Endothelial cell of umbilical vein (primary cell): ENCODE measurements at regions of chr13 and their contacts with region 1.

Region 1: DNA sequence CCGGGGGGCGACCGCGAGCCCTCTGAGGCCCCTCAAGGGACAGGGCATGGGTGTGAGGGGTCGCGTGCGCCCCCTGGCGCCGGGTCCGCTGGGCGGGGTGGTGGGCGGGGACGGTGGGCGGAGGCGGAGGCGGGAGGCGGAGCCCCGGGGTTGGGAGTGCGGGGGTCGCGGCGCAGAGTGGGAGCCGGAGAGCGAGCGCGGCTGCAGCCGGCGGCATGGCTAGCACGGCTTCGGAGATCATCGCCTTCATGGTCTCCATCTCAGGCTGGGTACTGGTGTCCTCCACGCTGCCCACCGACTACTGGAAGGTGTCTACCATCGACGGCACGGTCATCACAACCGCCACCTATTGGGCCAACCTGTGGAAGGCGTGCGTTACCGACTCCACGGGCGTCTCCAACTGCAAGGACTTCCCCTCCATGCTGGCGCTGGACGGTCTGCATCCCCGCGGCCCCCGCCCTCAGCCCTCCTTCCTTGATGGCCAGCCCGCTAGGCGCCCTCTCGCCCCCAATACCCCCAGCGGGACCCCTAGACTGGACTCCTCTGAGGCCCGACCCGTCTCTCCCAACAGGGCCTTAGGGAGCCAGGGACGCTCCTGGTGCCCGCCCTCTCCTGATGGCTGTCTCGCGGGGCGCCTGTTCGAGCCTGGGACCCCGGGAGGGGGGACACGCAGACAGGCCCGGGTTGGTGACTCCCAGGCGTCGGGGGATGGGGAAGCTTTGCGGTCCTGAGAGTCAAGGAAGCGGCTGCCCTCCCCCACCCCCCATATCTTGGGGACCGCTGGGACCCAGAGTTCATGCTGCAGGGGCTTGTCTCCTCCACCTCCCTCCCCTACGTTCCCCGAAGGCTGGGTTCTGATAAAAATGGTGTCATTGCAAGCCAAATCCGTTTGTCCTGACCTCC is at the start of gene CLDN10:
- DNase-seq: no peak
- H3K4me3 ChIP-seq: peak within 1 kb of the TSS in 2 of 3 experiments; percentile 3 to 40
- H3K27ac ChIP-seq: no peak within 1 kb of the TSS
- H3K4me1 ChIP-seq: no peaks in the 10 kb centered on the region
- H3K27me3 ChIP-seq: peaks cover 12 to 21% of the 10 kb centered on the region in 2 experiments
- CTCF ChIP-seq: peak; percentile 32 to 54
- POLR2A ChIP-seq: no peak
- total RNA-seq, gene CLDN10: 0.49 TPM in 1 of 2 replicates, not detected in the other

Region 2: GRCh38 chr13:94992036-94992960 is 560.5 kb before region 1 on chr13:
- CTCF ChIA-PET with region 1: no interaction called
- POLR2A ChIA-PET with region 1: no interaction called
- dilution Hi-C with region 1: no loop called
- intact Hi-C with region 1: no loop called
- DNase-seq: no peak
- H3K4me3 ChIP-seq: no peak overlapping the region
- H3K27ac ChIP-seq: no peak overlapping the region
- H3K4me1 ChIP-seq: no peaks in the 10 kb centered on the region
- H3K27me3 ChIP-seq: peaks cover 22 to 42% of the 10 kb centered on the region in 2 experiments
- CTCF ChIP-seq: no peak
- POLR2A ChIP-seq: no peak

Region 3: GRCh38 chr13:95156208-95156607 is 396.6 kb before region 1 on chr13:
- CTCF ChIA-PET with region 1: no interaction called
- POLR2A ChIA-PET with region 1: no interaction called
- dilution Hi-C with region 1: no loop called
- intact Hi-C with region 1: no loop called
- DNase-seq: peak; percentile 50
- H3K4me3 ChIP-seq: no peak overlapping the region
- H3K27ac ChIP-seq: no peak overlapping the region
- H3K4me1 ChIP-seq: peaks cover 22% of the 10 kb centered on the region
- H3K27me3 ChIP-seq: no peaks in the 10 kb centered on the region
- CTCF ChIP-seq: peak; percentile 18 to 27
- POLR2A ChIP-seq: no peak

Region 4: GRCh38 chr13:95494082-95494681 is 58.6 kb before region 1 on chr13:
- CTCF ChIA-PET with region 1: interaction called, 4 read pairs
- POLR2A ChIA-PET with region 1: no interaction called
- dilution Hi-C with region 1: no loop called
- intact Hi-C with region 1: loop called (anchors 1 kb)
- DNase-seq: peak; percentile 85
- H3K4me3 ChIP-seq: no peak overlapping the region
- H3K27ac ChIP-seq: no peak overlapping the region
- H3K4me1 ChIP-seq: no peaks in the 10 kb centered on the region
- H3K27me3 ChIP-seq: no peaks in the 10 kb centered on the region
- CTCF ChIP-seq: peak; percentile 48 to 59
- POLR2A ChIP-seq: no peak

Region 5: DNA sequence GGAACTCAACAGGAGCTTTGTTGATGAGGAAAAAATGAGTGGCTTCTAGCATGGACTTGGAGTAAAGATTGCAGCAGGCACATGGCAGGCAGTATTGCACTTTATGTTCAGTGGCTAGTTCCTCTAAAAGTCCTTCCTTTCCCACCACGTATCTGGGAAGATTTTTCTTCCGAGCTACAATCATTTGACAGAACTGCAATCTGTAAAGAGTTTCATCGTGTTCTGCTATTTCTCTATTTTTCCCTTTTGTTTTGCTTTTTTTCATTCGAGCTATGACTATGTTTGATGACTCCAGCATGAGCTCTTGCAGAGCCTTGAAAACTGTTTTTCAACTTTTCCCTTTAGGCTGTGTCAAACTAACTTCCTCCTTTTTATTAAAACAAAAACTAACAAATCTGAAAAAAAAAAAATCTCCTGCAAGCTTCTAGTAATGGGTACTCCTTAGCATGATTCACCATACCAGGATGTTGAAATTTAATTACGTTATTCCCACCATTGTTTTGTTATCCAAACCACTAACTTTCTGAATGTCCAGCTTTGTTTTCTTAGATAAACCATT is 12.0 kb after region 1 on chr13:
- CTCF ChIA-PET with region 1: interaction called, 16 read pairs
- POLR2A ChIA-PET with region 1: no interaction called
- dilution Hi-C with region 1: no loop called
- intact Hi-C with region 1: no loop called
- DNase-seq: peak; percentile 91
- H3K4me3 ChIP-seq: no peak overlapping the region
- H3K27ac ChIP-seq: peak overlapping the region; percentile 44
- H3K4me1 ChIP-seq: peaks cover 11% of the 10 kb centered on the region
- H3K27me3 ChIP-seq: no peaks in the 10 kb centered on the region
- CTCF ChIP-seq: no peak
- POLR2A ChIP-seq: no peak

Region 6: GRCh38 chr13:96223231-96223630 is 670.4 kb after region 1 on chr13:
- CTCF ChIA-PET with region 1: no interaction called
- POLR2A ChIA-PET with region 1: no interaction called
- dilution Hi-C with region 1: no loop called
- intact Hi-C with region 1: no loop called
- DNase-seq: no peak
- H3K4me3 ChIP-seq: no peak overlapping the region
- H3K27ac ChIP-seq: no peak overlapping the region
- H3K4me1 ChIP-seq: no peaks in the 10 kb centered on the region
- H3K27me3 ChIP-seq: no peaks in the 10 kb centered on the region
- CTCF ChIP-seq: no peak
- POLR2A ChIP-seq: no peak